A549 (cell line): ENCODE measurements at regions of chr17 and their contacts with region 1.

Region 1: DNA sequence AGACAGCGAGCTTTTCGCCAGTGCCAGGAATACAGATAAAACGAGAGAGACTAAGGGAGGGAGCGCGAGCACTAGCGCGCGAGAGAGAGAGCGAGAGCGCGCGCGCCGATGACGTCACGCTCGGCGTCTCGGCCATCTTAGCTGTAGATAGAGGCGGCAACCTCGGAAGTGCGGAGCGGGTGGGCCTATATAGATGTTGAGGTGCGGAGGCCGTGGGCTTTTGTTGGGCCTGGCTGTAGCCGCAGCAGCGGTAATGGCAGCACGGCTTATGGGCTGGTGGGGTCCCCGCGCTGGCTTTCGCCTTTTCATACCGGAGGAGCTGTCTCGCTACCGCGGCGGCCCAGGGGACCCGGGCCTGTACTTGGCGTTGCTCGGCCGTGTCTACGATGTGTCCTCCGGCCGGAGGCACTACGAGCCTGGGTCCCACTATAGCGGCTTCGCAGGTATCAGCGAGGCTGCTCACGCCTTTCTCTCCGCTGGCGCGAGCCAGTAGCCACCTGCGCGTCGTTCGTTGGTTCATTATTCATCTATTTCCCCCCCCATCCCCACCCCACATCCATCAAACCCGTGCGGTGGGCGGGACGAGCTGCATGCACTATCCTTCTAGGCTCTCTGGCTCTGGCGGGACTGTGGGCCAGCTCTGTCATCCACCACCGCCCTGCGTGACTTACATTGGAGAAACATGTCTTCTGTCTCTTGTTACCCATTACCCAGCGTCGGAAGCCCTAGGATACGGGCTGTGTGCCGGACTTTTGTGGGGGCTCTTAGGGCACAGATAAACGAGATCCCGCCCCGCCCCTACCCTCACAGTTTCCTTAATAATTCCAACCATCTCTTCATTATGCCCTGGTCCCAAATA is 795 bp downstream of the CYB5D2 start:
- DNase-seq: peak; percentile 96 to 97
- ATAC-seq: peak; percentile 90 to 91
- H3K4me3 ChIP-seq: peak overlapping the region; percentile 91
- H3K27ac ChIP-seq: peak overlapping the region; percentile 97 to 99
- H3K4me1 ChIP-seq: peaks cover 27% of the 10 kb centered on the region
- CTCF ChIP-seq: no peak
- EP300 ChIP-seq: no peak
- POLR2A ChIP-seq: peak; percentile 90
- RAD21 ChIP-seq: no peak

Region 2: GRCh38 chr17:3965118-3965803 is 178.5 kb before region 1 on chr17:
- CTCF ChIA-PET with region 1: interaction called, 4 read pairs
- POLR2A ChIA-PET with region 1: interaction called, 14 read pairs
- DNase-seq: peak; percentile 83 to 92
- ATAC-seq: peak; percentile 86 to 94
- H3K4me3 ChIP-seq: peak overlapping the region; percentile 55
- H3K27ac ChIP-seq: peak overlapping the region; percentile 74 to 86
- H3K4me1 ChIP-seq: peaks cover 24% of the 10 kb centered on the region
- CTCF ChIP-seq: no peak
- EP300 ChIP-seq: no peak
- POLR2A ChIP-seq: peak; percentile 64
- RAD21 ChIP-seq: peak; percentile 40 to 45; a peak in 3 of 5 replicates

Region 3: DNA sequence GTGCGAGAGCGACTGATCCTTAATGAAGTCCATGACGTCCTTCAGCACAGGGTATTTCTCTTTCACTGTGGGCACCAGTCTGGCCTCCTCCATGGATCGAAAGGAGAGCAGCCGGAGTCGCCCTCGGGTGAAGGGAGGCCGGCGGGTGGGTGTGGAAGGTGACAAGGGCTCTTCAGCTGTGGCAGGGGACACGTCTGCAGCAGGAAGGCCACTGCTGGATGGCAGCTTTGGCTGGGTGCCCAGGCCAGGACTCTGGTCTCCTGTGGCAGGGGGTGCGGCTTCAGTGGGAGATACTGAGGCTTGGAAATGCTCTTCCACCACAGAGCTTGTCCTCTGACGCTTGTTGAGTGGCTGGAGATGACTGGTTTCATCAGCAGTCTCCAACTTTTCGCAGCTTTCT is 79.4 kb before region 1 on chr17:
- CTCF ChIA-PET with region 1: no interaction called
- POLR2A ChIA-PET with region 1: no interaction called
- DNase-seq: no peak
- ATAC-seq: no peak
- H3K4me3 ChIP-seq: no peak overlapping the region
- H3K27ac ChIP-seq: no peak overlapping the region
- H3K4me1 ChIP-seq: no peaks in the 10 kb centered on the region
- CTCF ChIP-seq: no peak
- EP300 ChIP-seq: no peak
- POLR2A ChIP-seq: no peak
- RAD21 ChIP-seq: no peak

Region 4: GRCh38 chr17:4074831-4075495 is 68.8 kb before region 1 on chr17:
- CTCF ChIA-PET with region 1: no interaction called
- POLR2A ChIA-PET with region 1: no interaction called
- DNase-seq: peak; percentile 56 to 66
- ATAC-seq: peak; percentile 86 to 89
- H3K4me3 ChIP-seq: no peak overlapping the region
- H3K27ac ChIP-seq: no peak overlapping the region
- H3K4me1 ChIP-seq: no peaks in the 10 kb centered on the region
- CTCF ChIP-seq: peak; percentile 69
- EP300 ChIP-seq: no peak
- POLR2A ChIP-seq: no peak
- RAD21 ChIP-seq: peak; percentile 66 to 75

Region 5: DNA sequence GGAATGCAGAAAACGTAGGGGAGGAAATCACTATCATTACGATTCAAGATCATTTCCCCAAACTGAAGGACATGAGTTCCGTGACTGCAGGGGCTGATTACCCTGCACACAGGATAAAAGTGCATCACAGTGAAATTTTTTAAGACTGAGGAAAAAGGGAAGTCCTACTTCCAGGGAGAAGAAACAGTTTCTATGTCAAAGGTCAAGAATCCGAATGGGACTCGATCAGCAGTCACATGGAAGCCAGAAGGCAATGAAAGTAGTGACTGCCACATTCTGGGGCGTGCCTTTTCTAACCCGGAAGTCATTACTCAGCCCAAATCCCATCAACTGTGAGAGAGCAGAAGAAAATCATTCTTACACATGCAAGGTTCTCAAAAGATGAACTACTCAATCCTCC is 13.1 kb before region 1 on chr17:
- CTCF ChIA-PET with region 1: interaction called, 5 read pairs
- POLR2A ChIA-PET with region 1: interaction called, 15 read pairs
- DNase-seq: no peak
- ATAC-seq: no peak
- H3K4me3 ChIP-seq: no peak overlapping the region
- H3K27ac ChIP-seq: no peak overlapping the region
- H3K4me1 ChIP-seq: no peaks in the 10 kb centered on the region
- CTCF ChIP-seq: no peak
- EP300 ChIP-seq: no peak
- POLR2A ChIP-seq: no peak
- RAD21 ChIP-seq: no peak

Region 6: GRCh38 chr17:4161179-4161559 is 17.4 kb after region 1 on chr17:
- CTCF ChIA-PET with region 1: interaction called, 36 read pairs
- POLR2A ChIA-PET with region 1: interaction called, 54 read pairs
- DNase-seq: peak; percentile 90 to 98
- ATAC-seq: peak; percentile 89 to 94
- H3K4me3 ChIP-seq: no peak overlapping the region
- H3K27ac ChIP-seq: peak overlapping the region; percentile 90
- H3K4me1 ChIP-seq: peaks cover 39% of the 10 kb centered on the region
- CTCF ChIP-seq: no peak
- EP300 ChIP-seq: no peak
- POLR2A ChIP-seq: no peak
- RAD21 ChIP-seq: no peak

Region 7: GRCh38 chr17:4167786-4168185 is 24.0 kb after region 1 on chr17:
- CTCF ChIA-PET with region 1: interaction called, 15 read pairs
- POLR2A ChIA-PET with region 1: interaction called, 54 read pairs
- DNase-seq: no peak
- ATAC-seq: no peak
- H3K4me3 ChIP-seq: no peak overlapping the region
- H3K27ac ChIP-seq: no peak overlapping the region
- H3K4me1 ChIP-seq: peaks cover 11% of the 10 kb centered on the region; the same call in 2 of the 3 replicates
- CTCF ChIP-seq: no peak
- EP300 ChIP-seq: no peak
- POLR2A ChIP-seq: no peak
- RAD21 ChIP-seq: no peak